Activated T-helper 1 cell treated with anti-CD3 and anti-CD28 coated beads, Interleukin-12 subunit alpha, Interleukin-12 subunit beta, Interleukin-2, Interleukin-4 antibody, amounts not matched to agents 30 ng/mL and 10 ng/mL and 1 ng/mL, durations not matched to agents 14 hours and 24 hours and 36 hours (primary cell): ENCODE measurements at regions of chr6 and their contacts with region 1.

Region 1: GRCh38 chr6:137866914-137867684 is at the start of gene TNFAIP3:
- DNase-seq: peak; percentile 96
- H3K4me3 Mint-ChIP-seq: peak within 1 kb of the TSS; percentile 98
- H3K27ac Mint-ChIP-seq: peak within 1 kb of the TSS; percentile 99
- H3K4me1 Mint-ChIP-seq: peaks cover 46% of the 10 kb centered on the region
- H3K27me3 Mint-ChIP-seq: no peaks in the 10 kb centered on the region
- total RNA-seq, gene TNFAIP3: 250 and 257 TPM in 2 replicates

Region 2: GRCh38 chr6:137271245-137272183 is 595.6 kb before region 1 on chr6:
- intact Hi-C with region 1: no loop called
- DNase-seq: no peak
- H3K4me3 Mint-ChIP-seq: no peak overlapping the region
- H3K27ac Mint-ChIP-seq: no peak overlapping the region
- H3K4me1 Mint-ChIP-seq: peaks cover 13% of the 10 kb centered on the region
- H3K27me3 Mint-ChIP-seq: peaks cover 31% of the 10 kb centered on the region

Region 3: GRCh38 chr6:137791281-137792159 is 75.6 kb before region 1 on chr6:
- intact Hi-C with region 1: loop called (anchors 1 kb)
- DNase-seq: no peak
- H3K4me3 Mint-ChIP-seq: peak overlapping the region; percentile 59
- H3K27ac Mint-ChIP-seq: peak overlapping the region; percentile 87
- H3K4me1 Mint-ChIP-seq: peaks cover 76% of the 10 kb centered on the region
- H3K27me3 Mint-ChIP-seq: no peaks in the 10 kb centered on the region

Region 4: DNA sequence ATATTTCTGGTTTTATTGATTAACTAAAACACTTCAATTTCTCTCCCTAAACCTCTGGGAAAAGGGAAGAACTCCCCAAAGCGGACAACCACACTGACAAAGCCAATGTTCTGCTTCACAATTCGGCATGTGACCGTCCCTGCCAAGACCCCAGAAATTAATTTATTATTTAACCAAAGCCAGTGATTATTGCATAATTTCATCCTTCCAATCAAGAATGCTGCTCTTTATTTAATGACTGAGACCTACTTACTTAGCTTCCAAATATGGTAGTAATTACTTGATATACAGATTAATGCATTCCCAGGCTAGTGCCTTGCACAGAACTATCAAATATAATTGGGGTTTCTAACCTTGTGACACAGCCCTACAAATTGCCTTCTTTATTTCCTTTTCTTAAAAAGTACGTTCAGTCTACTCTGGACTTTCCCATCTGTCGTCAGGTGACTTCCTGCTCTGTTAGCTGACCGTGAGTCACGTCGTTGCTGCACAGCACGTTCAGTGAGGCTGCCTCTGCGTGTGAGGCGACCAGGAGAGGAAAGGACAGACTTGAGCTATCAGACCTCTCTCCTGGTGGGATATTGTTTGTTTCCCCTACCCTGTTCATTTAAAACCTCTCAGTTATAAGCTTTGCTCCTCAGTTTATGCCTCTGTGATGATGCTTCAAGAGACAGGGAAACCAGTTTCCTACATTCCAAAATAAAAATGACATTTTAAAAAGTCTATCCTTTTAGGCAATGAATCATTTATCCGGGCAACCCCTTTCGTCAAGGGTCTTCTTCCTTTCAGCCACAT is 55.8 kb before region 1 on chr6:
- intact Hi-C with region 1: loop called (anchors 1 kb)
- DNase-seq: peak; percentile 78
- H3K4me3 Mint-ChIP-seq: peak overlapping the region; percentile 43
- H3K27ac Mint-ChIP-seq: peak overlapping the region; percentile 81
- H3K4me1 Mint-ChIP-seq: peaks cover 68% of the 10 kb centered on the region
- H3K27me3 Mint-ChIP-seq: no peaks in the 10 kb centered on the region

Region 5: GRCh38 chr6:137849181-137849980 is 17.7 kb before region 1 on chr6:
- intact Hi-C with region 1: loop called (anchors 1 kb)
- DNase-seq: no peak
- H3K4me3 Mint-ChIP-seq: no peak overlapping the region
- H3K27ac Mint-ChIP-seq: peak overlapping the region; percentile 53
- H3K4me1 Mint-ChIP-seq: peaks cover 23% of the 10 kb centered on the region
- H3K27me3 Mint-ChIP-seq: no peaks in the 10 kb centered on the region

Region 6: DNA sequence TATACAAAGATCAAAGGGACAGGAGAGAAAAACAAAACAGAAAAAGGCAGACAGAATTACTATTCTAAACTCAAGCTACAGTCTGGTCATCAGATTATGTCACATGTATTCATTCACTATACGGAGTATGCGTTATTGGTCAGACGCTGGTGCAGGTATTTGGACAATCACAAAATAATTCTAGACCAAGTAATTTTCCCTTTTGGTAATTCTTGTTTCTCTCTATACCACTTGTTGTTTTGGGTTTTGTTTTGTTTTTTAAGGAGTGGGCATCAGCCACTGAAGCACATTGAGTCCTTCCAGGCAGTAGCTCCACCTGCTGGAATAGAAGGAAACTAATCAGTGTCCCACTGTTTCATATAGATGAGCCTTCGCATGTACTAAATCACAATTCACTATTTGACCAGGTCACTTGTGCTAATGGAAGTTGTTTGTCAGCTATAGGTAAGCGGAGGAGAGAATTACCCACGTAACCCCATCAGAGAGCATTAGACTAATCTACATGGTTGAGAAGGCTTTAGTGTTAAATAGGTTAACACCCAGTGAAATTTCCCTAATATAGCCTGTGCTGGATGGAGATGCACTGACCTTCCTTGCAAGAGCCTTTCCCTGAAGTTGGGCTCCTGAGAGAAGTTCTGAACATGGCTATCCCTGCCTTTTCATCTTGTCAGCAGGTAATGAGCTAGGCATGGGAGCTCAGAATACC is 77.8 kb after region 1 on chr6:
- intact Hi-C with region 1: loop called (anchors 1 kb)
- DNase-seq: no peak
- H3K4me3 Mint-ChIP-seq: no peak overlapping the region
- H3K27ac Mint-ChIP-seq: peak overlapping the region; percentile 15
- H3K4me1 Mint-ChIP-seq: peaks cover 86% of the 10 kb centered on the region
- H3K27me3 Mint-ChIP-seq: no peaks in the 10 kb centered on the region

Region 7: GRCh38 chr6:138001750-138002349 is 134.8 kb after region 1 on chr6:
- intact Hi-C with region 1: loop called (anchors 1 kb)
- DNase-seq: peak; percentile 38
- H3K4me3 Mint-ChIP-seq: no peak overlapping the region
- H3K27ac Mint-ChIP-seq: no peak overlapping the region
- H3K4me1 Mint-ChIP-seq: peaks cover 27% of the 10 kb centered on the region
- H3K27me3 Mint-ChIP-seq: peaks cover 6% of the 10 kb centered on the region

Region 8: GRCh38 chr6:138188278-138188941 is 321.3 kb after region 1 on chr6:
- intact Hi-C with region 1: no loop called
- DNase-seq: no peak
- H3K4me3 Mint-ChIP-seq: no peak overlapping the region
- H3K27ac Mint-ChIP-seq: no peak overlapping the region
- H3K4me1 Mint-ChIP-seq: no peaks in the 10 kb centered on the region
- H3K27me3 Mint-ChIP-seq: peaks cover 5% of the 10 kb centered on the region